ENCODE measurements at regions of chr17 and their contacts with region 1.

Region 1: DNA sequence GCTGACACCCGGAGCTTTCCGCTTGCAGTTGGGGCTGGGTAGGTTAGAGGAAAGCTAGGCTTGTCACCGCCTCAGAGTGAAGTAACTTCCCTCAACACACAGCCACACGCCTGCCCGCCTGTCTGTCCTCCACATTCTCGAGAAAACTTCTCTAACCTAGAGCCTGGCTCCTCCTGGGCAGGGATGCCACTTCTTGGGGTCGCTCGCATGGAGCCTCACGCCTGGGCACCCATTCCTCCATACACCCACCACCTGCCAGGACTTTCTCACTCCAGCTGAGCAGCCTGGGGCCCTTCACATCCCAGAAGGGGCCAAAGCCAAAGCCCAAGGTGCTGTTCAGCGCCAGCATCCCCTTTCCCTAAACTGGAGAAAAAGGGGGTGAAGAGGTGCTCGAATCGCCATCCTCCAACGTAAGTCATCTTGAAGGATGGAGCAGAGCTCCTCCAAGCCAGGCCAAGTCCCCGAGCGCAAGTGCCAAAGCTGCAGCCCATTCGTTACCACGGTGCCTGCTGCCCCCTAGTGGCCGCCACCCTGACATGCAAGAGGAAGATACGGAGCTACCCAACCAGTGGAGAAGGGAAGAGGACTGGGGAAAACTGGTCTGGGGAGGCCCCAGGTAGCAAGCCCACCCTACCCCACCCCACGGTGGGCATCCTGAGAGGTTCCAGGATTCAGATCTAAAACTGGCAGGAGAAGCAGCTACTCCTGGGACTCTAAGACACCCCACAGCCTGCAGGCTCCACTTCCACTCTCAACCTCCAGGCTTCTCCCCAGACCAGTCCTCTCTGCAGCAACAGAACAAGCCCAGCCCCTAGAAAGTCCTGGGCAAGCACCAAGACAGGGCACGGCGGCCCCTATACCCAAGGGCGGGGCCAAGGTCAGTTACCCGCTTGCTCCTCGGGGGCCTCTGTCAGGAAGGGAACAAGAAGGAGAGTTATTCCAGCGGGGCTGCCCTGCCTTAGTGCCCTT is 63.1 kb downstream of the MYO18A start:
- DNase-seq: peak; percentile 87
- ATAC-seq: peak; percentile 87
- H3K4me3 Mint-ChIP-seq: no peak overlapping the region
- H3K27ac Mint-ChIP-seq: peak overlapping the region; percentile 34
- H3K4me1 Mint-ChIP-seq: peaks cover 11% of the 10 kb centered on the region
- H3K27me3 Mint-ChIP-seq: no peaks in the 10 kb centered on the region
- CTCF ChIP-seq: peak; percentile 97

Region 2: GRCh38 chr17:28726226-28727130 is 390.6 kb before region 1 on chr17 and contains the start of gene TLCD1:
- CTCF ChIA-PET with region 1: interaction called, 11 read pairs
- POLR2A ChIA-PET with region 1: no interaction called
- intact Hi-C with region 1: no loop called
- DNase-seq: peak; percentile 95
- ATAC-seq: peak; percentile 50
- H3K4me3 Mint-ChIP-seq: peak within 1 kb of the TSS; percentile 100
- H3K27ac Mint-ChIP-seq: peak within 1 kb of the TSS; percentile 99
- H3K4me1 Mint-ChIP-seq: peaks cover 39% of the 10 kb centered on the region
- H3K27me3 Mint-ChIP-seq: no peaks in the 10 kb centered on the region
- CTCF ChIP-seq: peak; percentile 100
- total RNA-seq, gene TLCD1: 6.5 to 8.7 TPM

Region 3: DNA sequence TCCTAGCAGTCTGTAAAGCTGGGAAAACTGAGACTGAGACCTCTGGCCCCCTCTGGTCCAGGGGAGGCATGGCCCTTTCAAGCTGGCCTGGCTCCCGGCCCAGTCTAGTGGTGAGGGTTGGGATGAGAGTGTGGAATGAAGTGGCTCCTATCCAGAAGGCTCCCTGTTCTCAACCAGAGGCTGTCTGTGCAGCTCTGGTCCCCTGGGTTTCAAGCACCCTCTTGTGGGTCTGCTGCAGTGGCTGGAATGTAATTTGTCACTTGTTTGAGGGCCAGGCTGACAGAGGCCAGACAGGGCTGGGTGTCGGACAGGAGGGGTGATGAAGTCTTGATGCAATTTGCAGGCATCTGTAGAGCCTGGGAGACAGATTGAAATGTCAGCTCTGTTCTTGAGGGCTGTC is 143.7 kb before region 1 on chr17:
- CTCF ChIA-PET with region 1: interaction called, 31 read pairs
- POLR2A ChIA-PET with region 1: no interaction called
- intact Hi-C with region 1: no loop called
- DNase-seq: no peak
- ATAC-seq: no peak
- H3K4me3 Mint-ChIP-seq: no peak overlapping the region
- H3K27ac Mint-ChIP-seq: no peak overlapping the region
- H3K4me1 Mint-ChIP-seq: no peaks in the 10 kb centered on the region
- H3K27me3 Mint-ChIP-seq: no peaks in the 10 kb centered on the region
- CTCF ChIP-seq: no peak

Region 4: DNA sequence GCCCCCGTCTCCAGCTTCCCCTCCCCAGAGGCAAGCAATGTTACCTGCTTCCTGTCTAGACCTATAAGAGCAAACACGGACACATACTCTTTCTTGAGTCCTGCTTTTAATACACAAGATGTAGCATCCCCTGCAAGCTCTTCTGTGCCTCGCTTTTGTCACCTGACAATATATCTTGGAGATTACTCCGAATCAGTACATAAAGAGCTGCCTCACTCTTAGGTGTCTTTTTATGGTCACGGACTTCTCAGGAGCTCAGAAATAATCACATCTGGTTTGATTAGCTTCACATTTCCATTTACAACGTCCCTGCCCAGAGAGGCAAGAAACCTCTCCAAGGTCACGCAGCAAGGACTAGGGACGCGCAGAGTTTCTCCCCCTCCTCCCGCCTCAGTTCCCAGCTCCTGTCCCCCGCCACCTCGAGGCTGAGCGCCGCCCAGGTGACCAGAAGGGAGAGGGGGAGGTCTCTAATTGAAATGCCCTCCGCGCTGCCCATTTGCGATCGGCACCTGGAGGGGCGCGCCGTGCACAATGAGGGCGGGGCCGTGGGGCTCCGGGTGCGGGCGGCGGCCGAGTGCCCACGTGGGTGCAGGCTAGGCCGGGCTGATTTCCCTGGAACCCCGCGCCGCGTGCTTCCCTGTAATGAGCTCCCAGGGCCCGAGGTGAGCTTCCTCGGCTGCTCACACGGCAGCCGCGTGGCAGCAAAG is 97.5 kb before region 1 on chr17:
- CTCF ChIA-PET with region 1: interaction called, 22 read pairs
- POLR2A ChIA-PET with region 1: no interaction called
- intact Hi-C with region 1: no loop called
- DNase-seq: peak; percentile 7
- ATAC-seq: peak; percentile 45
- H3K4me3 Mint-ChIP-seq: no peak overlapping the region
- H3K27ac Mint-ChIP-seq: no peak overlapping the region
- H3K4me1 Mint-ChIP-seq: peaks cover 6% of the 10 kb centered on the region
- H3K27me3 Mint-ChIP-seq: peaks cover 41% of the 10 kb centered on the region
- CTCF ChIP-seq: no peak

Region 5: DNA sequence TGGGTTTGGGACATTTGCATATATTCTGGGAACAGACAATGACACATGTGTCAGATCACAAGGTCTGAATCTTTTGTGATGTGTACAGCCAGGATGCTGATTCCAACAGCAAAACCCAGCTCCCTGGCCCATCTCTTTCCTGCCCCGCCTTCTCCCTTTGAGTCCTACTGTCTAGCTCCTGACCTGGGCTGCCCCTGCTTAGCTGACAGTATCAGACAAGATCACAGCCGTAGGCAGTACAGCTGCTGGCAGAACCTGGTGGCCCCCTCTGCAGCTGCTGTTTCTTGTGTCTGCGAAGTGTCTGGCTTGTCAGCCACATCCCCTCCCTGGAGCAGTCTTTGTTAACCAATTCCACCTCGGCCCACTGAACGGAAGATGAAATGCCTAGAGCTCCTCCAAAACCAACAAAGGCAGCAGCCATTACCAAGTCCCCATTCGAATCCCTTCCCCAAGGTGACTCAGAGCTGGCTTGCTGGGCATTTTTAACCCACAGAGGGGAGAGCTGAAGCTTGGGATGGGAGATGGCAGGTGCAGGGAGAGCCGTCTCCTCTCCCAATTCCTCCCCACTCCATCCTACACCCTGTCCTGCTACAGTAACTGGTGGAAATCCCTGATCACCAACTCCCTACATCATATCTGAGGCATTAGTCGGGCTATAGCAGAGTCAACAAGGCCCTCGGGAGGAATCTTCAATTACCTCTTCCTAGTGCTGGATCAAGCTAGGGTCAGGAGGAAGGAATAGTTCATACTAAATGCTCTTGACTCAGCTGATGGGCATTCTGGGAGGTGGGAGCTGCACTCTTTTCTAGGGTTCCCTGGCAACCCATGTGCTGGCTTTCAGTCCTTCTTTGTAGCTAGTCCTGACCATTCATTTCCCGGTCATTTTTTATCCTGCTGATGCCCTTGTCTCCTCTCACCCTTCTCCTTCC is 68.4 kb before region 1 on chr17:
- CTCF ChIA-PET with region 1: interaction called, 16 read pairs
- POLR2A ChIA-PET with region 1: no interaction called
- intact Hi-C with region 1: no loop called
- DNase-seq: no peak
- ATAC-seq: peak; percentile 20
- H3K4me3 Mint-ChIP-seq: no peak overlapping the region
- H3K27ac Mint-ChIP-seq: no peak overlapping the region
- H3K4me1 Mint-ChIP-seq: peaks cover 5% of the 10 kb centered on the region
- H3K27me3 Mint-ChIP-seq: no peaks in the 10 kb centered on the region
- CTCF ChIP-seq: no peak

Region 6: GRCh38 chr17:29102741-29103181 is 14.3 kb before region 1 on chr17:
- CTCF ChIA-PET with region 1: interaction called, 25 read pairs
- POLR2A ChIA-PET with region 1: interaction called, 3 read pairs
- intact Hi-C with region 1: no loop called
- DNase-seq: no peak
- ATAC-seq: no peak
- H3K4me3 Mint-ChIP-seq: no peak overlapping the region
- H3K27ac Mint-ChIP-seq: no peak overlapping the region
- H3K4me1 Mint-ChIP-seq: peaks cover 11% of the 10 kb centered on the region
- H3K27me3 Mint-ChIP-seq: no peaks in the 10 kb centered on the region
- CTCF ChIP-seq: no peak

Region 7: DNA sequence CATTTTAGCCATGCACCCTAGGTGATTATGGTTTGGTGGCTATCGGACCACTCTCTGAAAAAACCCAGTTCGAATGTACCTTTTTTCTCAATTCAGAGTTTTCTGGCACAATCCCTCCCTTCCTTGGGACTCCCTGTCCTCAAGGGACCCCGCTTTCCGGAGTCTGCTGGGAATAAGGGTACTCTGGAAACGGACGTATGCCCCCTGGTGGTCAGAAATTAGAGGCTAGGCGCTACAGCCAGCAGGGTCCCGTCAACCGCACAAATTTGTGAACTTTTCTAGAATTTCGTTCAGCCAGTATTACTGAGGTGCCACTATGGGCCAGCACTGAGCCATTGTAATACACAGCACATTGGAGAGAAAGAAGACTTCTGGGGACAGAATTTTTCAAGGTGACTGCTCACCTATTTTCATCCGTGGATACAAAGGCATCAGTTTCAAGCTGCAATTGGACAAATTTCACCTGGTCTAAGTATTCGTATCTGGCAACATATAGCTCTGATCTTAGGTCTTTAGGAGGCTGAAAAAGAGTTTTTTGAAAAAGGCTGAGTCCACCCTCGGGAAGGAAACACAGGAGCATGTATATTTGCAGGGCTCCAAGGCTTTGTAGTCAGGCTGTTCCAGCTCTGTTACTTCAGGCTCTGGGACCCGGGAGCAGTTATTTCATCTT is 102.4 kb after region 1 on chr17:
- CTCF ChIA-PET with region 1: interaction called, 27 read pairs
- POLR2A ChIA-PET with region 1: no interaction called
- intact Hi-C with region 1: no loop called
- DNase-seq: peak; percentile 86
- ATAC-seq: peak; percentile 97
- H3K4me3 Mint-ChIP-seq: no peak overlapping the region
- H3K27ac Mint-ChIP-seq: no peak overlapping the region
- H3K4me1 Mint-ChIP-seq: peaks cover 4% of the 10 kb centered on the region
- H3K27me3 Mint-ChIP-seq: no peaks in the 10 kb centered on the region
- CTCF ChIP-seq: peak; percentile 98

Measured in activated CD8-positive, alpha-beta T cell treated with anti-CD3 and anti-CD28 coated beads for 36 hours (primary cell).